ENCODE measurements at regions of chr6 and their contacts with region 1.

Region 1: GRCh38 chr6:36623547-36624459 is 29.6 kb downstream of the SRSF3 start:
- DNase-seq: peak; percentile 90

Region 2: DNA sequence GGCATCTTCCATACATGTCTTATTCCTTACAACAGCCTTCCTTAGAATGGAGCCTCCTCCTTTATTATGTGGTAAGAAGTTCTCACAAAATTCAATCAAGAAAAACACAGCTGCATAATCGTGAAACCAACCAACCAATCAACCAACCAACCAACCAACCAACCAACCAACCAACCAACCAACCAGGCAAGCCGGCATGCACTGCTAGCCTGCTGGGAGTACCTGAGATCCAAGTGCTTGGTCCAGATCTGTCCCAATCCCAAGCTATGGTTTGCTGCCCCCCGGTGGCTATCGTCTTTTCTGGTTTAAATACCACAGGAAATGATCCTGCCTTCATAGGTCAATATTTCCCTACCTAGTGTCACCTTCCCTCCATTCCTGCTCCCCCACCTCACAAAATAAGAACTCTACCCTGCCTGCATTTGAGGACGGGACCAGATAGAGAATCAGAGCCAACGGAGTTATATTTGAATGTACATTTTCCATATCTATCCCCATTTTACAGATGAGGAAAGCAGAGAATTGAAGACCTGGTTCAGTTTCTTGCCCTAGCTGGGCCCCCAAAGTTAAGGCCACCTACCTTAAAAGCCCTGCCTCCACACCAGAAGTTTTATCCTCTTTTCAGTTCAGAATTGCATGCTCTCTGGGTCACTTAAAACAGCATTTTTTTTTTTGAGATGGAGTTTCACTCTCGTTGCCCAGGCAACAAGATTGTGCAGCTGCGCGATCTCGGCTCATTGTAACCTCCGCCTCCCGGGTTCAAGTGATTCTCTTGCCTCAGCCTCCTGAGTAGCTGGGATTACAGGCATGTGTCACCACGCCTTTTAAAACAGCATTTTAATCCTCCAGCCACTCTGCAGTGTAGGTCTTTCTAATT is 100.9 kb after region 1 on chr6:
- intact Hi-C with region 1: loop called (anchors 2 kb)
- DNase-seq: no peak

Region 3: GRCh38 chr6:36759148-36759759 is 135.5 kb after region 1 on chr6:
- intact Hi-C with region 1: loop called (anchors 5 kb)
- DNase-seq: peak; percentile 93

Measured in cardiac septum (tissue), 1 donor.